ENCODE measurements at regions of chr11 and their contacts with region 1.

Region 1: DNA sequence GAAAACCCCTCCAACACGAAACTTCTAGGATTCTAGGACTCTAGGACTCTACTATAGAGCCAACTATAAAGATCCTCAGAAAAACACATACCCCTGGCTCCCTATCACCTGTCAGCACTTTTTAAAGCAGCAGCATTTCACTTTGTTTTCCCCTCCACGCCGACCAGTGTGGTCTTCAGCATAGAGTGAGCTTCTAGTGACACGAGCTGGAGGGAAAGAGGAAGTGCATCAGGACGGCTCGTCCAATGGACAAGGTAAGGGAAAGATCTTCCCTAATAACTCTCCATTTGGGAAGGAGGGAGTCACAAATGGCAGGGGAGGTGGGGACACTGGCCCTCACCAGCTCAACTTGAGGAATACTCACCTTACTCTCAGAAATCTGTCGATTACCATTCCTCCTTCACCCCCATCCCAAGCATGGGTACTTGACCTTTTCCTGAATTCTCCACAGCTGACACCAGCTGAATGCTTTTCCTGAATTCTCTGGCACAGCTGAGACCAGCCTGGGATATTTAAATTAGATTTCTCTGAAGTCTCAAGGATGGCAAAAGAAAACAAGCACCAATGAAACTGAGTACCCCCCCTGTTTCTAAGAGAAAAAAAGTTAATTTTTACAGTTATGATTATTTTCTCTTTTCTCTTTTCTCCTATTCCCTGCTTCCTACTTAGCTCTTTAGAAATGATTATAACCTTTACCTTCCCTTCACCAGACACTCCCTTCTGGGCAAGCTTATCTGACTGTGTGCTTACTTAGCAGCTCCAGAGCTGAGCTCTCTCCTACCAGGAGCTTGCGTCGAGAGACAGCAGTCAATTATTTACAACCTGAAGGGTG is 33.3 kb upstream of the NNMT start:
- DNase-seq: peak; percentile 33
- H3K4me3 ChIP-seq: no peak overlapping the region
- H3K27ac ChIP-seq: no peak overlapping the region
- H3K4me1 ChIP-seq: no peaks in the 10 kb centered on the region
- H3K27me3 ChIP-seq: no peaks in the 10 kb centered on the region
- CTCF ChIP-seq: peak; percentile 67 to 76

Region 2: DNA sequence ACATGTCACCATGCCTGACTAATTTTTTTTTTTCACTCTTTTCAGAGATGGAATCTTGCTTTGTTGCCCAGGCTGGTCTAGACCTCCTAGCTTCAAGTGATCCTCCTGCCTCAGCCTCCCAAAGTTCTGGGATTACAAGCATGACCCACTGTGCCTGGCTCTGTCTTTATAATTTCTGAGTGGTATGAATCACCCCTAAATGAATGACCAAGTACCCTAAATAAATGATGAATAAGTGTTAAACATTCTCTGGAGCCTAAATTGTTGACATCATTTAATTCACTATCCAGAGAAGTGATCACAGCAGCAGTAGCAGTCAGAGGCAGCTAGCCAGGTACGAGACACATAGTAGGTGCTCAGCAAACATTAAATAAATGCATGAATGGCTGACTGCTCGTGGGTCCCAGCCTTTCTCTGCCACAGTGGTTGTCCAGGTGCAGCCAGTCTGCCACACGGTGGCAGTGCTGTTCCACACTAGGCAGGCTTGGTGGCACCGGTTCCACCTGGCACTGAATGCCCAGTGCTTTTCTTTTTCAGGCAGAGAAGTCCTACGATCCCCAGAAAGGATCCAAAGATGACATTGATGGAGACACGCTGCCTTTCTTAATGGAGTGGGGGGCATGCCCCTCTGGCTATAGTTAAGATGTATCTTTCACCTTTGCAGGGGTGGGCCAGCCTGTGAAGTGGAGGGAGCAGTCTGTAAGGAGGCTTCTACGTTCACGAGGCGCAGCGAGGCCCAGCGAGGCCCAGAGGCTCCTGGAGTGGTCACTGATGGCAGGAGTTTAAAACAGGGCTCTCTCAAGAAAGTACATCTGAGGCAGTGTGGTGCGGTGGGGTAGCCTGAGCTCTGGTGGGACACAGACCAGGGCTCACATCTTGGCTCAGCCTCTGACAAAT is 957.2 kb before region 1 on chr11:
- CTCF ChIA-PET with region 1: no interaction called
- dilution Hi-C with region 1: no loop called
- in situ Hi-C with region 1: no loop called
- intact Hi-C with region 1: loop called (anchors 2 kb)
- DNase-seq: peak; percentile 61
- H3K4me3 ChIP-seq: no peak overlapping the region
- H3K27ac ChIP-seq: no peak overlapping the region
- H3K4me1 ChIP-seq: peaks cover 13% of the 10 kb centered on the region
- H3K27me3 ChIP-seq: no peaks in the 10 kb centered on the region
- CTCF ChIP-seq: peak; percentile 99

Region 3: DNA sequence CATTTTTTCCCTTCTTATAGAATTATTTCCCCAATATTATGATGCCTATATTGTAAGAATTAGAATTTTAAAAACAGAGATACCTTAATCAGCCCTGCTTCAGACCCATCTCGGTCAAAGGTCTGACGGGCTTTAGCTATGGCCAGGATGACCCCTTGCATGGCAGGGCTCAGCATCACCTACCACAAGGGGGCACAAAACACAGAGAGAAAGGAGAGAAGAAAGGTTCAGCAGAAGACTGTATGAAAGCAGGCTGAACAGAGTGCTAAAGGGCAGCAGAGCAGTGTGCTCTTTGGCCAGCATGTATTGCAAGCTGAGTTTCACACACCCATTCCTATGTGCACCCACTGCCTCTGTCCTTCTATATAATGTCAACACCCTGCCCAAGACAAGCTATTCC is 456.5 kb before region 1 on chr11:
- CTCF ChIA-PET with region 1: interaction called, 4 read pairs
- dilution Hi-C with region 1: no loop called
- in situ Hi-C with region 1: no loop called
- intact Hi-C with region 1: loop called (anchors 1 kb)
- DNase-seq: peak; percentile 21
- H3K4me3 ChIP-seq: no peak overlapping the region
- H3K27ac ChIP-seq: no peak overlapping the region
- H3K4me1 ChIP-seq: no peaks in the 10 kb centered on the region
- H3K27me3 ChIP-seq: no peaks in the 10 kb centered on the region
- CTCF ChIP-seq: peak; percentile 48 to 59

Region 4: GRCh38 chr11:113906038-113906437 is 356.9 kb before region 1 on chr11:
- CTCF ChIA-PET with region 1: no interaction called
- dilution Hi-C with region 1: loop called (anchors 5 kb)
- in situ Hi-C with region 1: loop called in 1 of 2 experiments (anchors 10 kb)
- intact Hi-C with region 1: no loop called
- DNase-seq: no peak
- H3K4me3 ChIP-seq: no peak overlapping the region
- H3K27ac ChIP-seq: no peak overlapping the region
- H3K4me1 ChIP-seq: no peaks in the 10 kb centered on the region
- H3K27me3 ChIP-seq: peaks cover 14% of the 10 kb centered on the region
- CTCF ChIP-seq: no peak

Region 5: GRCh38 chr11:114036156-114036811 is 226.6 kb before region 1 on chr11:
- CTCF ChIA-PET with region 1: no interaction called
- dilution Hi-C with region 1: loop called (anchors 5 kb)
- in situ Hi-C with region 1: loop called (anchors 10 kb)
- intact Hi-C with region 1: loop called (anchors 1 kb)
- DNase-seq: peak; percentile 48
- H3K4me3 ChIP-seq: peak overlapping the region; percentile 33 to 53 (median 34)
- H3K27ac ChIP-seq: no peak overlapping the region
- H3K4me1 ChIP-seq: no peaks in the 10 kb centered on the region
- H3K27me3 ChIP-seq: no peaks in the 10 kb centered on the region
- CTCF ChIP-seq: peak; percentile 80 to 93